ENCODE measurements at regions of chr2 and their contacts with region 1.

Region 1: GRCh38 chr2:168346725-168347477 is 99.5 kb upstream of the STK39 start:
- DNase-seq: peak in 1 of 2 donors; percentile 63
- ATAC-seq: peak; percentile 89
- H3K4me3 ChIP-seq: peak overlapping the region; percentile 42 to 90
- H3K27ac ChIP-seq: no peak overlapping the region
- H3K4me1 ChIP-seq: no peaks in the 10 kb centered on the region
- H3K27me3 ChIP-seq: no peaks in the 10 kb centered on the region

Region 2: GRCh38 chr2:167940346-167940725 is 406.6 kb before region 1 on chr2:
- intact Hi-C with region 1: no loop called
- DNase-seq: no peak
- ATAC-seq: no peak
- H3K4me3 ChIP-seq: no peak overlapping the region
- H3K27ac ChIP-seq: no peak overlapping the region
- H3K4me1 ChIP-seq: no peaks in the 10 kb centered on the region
- H3K27me3 ChIP-seq: no peaks in the 10 kb centered on the region

Region 3: DNA sequence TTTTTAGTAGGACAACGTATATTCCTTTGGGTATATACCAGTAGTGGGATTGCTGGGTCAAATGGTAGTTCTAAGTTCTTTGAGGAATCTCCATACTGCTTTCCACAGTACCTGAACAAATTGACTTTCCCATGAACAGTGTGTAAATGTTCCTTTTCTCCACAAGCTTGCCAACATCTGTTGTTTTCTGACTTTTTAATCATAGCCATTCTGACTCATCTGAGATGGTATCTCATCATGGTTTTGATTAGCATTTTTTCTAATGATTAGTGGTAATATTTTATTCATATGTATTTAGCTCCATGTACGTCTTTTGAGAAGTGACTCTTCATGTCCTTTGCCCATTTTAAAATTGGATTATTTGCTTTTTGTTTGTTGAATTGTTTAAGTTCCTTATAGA is 50.7 kb after region 1 on chr2:
- intact Hi-C with region 1: no loop called
- DNase-seq: no peak
- ATAC-seq: no peak
- H3K4me3 ChIP-seq: no peak overlapping the region
- H3K27ac ChIP-seq: no peak overlapping the region
- H3K4me1 ChIP-seq: no peaks in the 10 kb centered on the region
- H3K27me3 ChIP-seq: no peaks in the 10 kb centered on the region

Region 4: GRCh38 chr2:168687314-168687713 is 340.4 kb after region 1 on chr2:
- intact Hi-C with region 1: loop called (anchors 5 kb)
- DNase-seq: no peak
- ATAC-seq: no peak
- H3K4me3 ChIP-seq: no peak overlapping the region
- H3K27ac ChIP-seq: no peak overlapping the region
- H3K4me1 ChIP-seq: no peaks in the 10 kb centered on the region
- H3K27me3 ChIP-seq: no peaks in the 10 kb centered on the region

Region 5: GRCh38 chr2:168705534-168706470 is 358.9 kb after region 1 on chr2:
- intact Hi-C with region 1: loop called in 1 of 2 experiments (anchors 5 kb)
- DNase-seq: no peak
- ATAC-seq: no peak
- H3K4me3 ChIP-seq: no peak overlapping the region
- H3K27ac ChIP-seq: no peak overlapping the region
- H3K4me1 ChIP-seq: no peaks in the 10 kb centered on the region
- H3K27me3 ChIP-seq: no peaks in the 10 kb centered on the region

Region 6: GRCh38 chr2:168758970-168759820 is 412.3 kb after region 1 on chr2:
- intact Hi-C with region 1: loop called (anchors 5 kb)
- DNase-seq: no peak
- ATAC-seq: peak; percentile 68
- H3K4me3 ChIP-seq: no peak overlapping the region
- H3K27ac ChIP-seq: no peak overlapping the region
- H3K4me1 ChIP-seq: no peaks in the 10 kb centered on the region
- H3K27me3 ChIP-seq: no peaks in the 10 kb centered on the region

Region 7: DNA sequence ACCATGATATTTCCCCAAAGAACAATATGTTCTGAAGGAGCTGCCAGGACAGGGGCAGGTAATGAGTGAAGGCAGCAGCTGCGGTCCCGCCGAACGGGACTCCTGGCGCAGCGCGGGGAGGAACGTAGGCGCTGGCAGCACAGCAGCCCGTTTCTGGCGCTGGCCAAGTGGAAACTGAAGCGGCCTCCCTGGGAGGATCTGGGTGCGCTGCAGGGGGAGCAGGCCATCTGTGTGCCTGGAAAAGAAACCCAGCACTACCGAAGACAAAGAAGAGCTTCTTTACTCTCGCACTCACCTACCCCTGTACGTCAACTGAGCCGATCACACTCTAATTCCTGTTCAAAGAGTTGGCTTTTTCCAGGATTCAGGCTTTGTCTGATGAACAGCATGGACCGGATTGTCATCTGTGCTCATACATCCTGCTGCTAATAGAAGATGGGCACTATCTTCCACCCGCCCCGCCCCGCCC is 566.0 kb after region 1 on chr2:
- intact Hi-C with region 1: loop called in 1 of 2 experiments (anchors 10 kb)
- DNase-seq: no peak
- ATAC-seq: peak; percentile 75
- H3K4me3 ChIP-seq: peak overlapping the region in 1 of 2 donors; percentile 20
- H3K27ac ChIP-seq: no peak overlapping the region
- H3K4me1 ChIP-seq: no peaks in the 10 kb centered on the region
- H3K27me3 ChIP-seq: peaks cover 0 to 3% of the 10 kb centered on the region in 2 donors

Region 8: GRCh38 chr2:168920504-168921157 is 573.7 kb after region 1 on chr2:
- intact Hi-C with region 1: loop called (anchors 10 kb)
- DNase-seq: no peak
- ATAC-seq: no peak
- H3K4me3 ChIP-seq: no peak overlapping the region
- H3K27ac ChIP-seq: no peak overlapping the region
- H3K4me1 ChIP-seq: no peaks in the 10 kb centered on the region
- H3K27me3 ChIP-seq: no peaks in the 10 kb centered on the region